Activated T-helper 2 cell treated with anti-CD3 and anti-CD28 coated beads, Interferon-gamma antibody, Interleukin-2, Interleukin-4, amounts not matched to agents 10 μg/mL and 5 μg/mL and 100 μg/mL, durations not matched to agents 14 hours and 24 hours and 36 hours (primary cell): ENCODE measurements at regions of chr2 and their contacts with region 1.

Region 1: DNA sequence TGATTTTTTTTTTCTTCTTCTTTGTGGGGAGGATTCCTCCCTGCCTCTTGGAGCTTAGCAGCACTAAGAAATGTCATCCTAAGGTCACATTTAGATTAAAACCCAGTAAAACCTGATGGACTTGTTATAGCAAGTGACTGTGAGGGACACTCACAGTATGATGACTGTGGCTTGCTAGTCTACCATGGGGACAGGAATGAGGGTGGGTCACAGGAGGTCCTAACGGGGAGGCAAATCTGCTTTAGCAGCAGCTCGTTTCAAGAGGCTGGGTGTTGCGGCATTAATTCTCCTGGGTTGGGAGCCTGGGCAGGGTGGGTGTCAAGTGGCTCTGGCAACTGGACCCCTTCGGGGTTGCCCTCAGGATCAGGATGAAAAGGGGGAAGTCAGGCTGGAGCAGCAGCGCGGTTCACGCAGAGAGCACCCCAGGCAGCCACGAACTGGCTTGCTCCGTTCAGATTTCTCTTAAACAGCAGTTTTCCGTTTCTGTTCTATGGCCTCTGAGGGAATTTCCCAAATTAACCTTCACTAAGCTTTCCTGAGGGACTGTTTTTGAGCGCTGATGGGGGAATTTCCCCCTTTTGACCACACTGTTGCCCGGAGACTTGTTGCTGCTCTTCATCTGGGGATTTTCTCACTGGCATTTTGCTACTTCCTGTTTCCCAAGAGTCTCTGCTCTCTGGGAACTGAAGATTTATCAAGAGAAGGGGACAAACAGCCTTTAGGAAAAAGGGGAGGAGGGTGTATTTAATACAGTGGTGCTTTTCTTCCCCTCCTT is 59.8 kb upstream of the PELI1 start:
- DNase-seq: no peak
- H3K4me3 Mint-ChIP-seq: peak overlapping the region; percentile 42
- H3K27ac Mint-ChIP-seq: peak overlapping the region; percentile 78
- H3K4me1 Mint-ChIP-seq: peaks cover 50% of the 10 kb centered on the region
- H3K27me3 Mint-ChIP-seq: no peaks in the 10 kb centered on the region

Region 2: GRCh38 chr2:64179582-64180321 is 24.3 kb before region 1 on chr2:
- intact Hi-C with region 1: loop called (anchors 2 kb)
- DNase-seq: no peak
- H3K4me3 Mint-ChIP-seq: no peak overlapping the region
- H3K27ac Mint-ChIP-seq: no peak overlapping the region
- H3K4me1 Mint-ChIP-seq: peaks cover 16% of the 10 kb centered on the region
- H3K27me3 Mint-ChIP-seq: peaks cover 13% of the 10 kb centered on the region

Region 3: GRCh38 chr2:64283641-64284361 is 79.8 kb after region 1 on chr2:
- intact Hi-C with region 1: no loop called
- DNase-seq: no peak
- H3K4me3 Mint-ChIP-seq: no peak overlapping the region
- H3K27ac Mint-ChIP-seq: no peak overlapping the region
- H3K4me1 Mint-ChIP-seq: no peaks in the 10 kb centered on the region
- H3K27me3 Mint-ChIP-seq: peaks cover 3% of the 10 kb centered on the region